Mammary epithelial cell (primary cell): ENCODE measurements at regions of chrX and their contacts with region 1.

Region 1: DNA sequence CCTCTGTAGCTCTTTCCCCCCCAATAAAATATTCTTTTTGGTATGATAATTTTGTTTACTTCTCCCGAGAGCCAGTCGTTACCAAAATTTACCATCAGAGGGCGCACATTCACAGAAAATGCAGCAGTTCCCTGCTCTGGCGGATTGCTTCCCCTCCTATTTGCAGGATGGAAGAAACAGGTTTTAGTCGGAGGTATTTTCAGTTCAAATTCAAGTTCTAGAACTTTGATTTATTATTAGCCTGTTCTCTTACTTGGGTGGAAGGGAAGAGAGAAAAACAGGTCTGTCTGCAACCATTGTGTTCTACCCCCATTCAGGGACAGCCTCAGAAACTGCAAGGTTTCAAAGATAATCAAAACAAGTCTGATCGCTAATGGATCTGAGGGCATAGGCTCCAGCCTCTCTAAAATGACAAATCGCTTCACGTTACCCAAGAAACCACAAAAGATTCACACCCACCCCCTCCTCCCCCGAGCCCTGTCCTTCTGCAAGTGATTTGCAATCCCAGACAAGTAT is 263.8 kb upstream of the RPS6KA3 start:
- DNase-seq: peak; percentile 32
- H3K4me3 ChIP-seq: peak overlapping the region in 1 of 3 experiments; percentile 17
- H3K27ac ChIP-seq: no peak overlapping the region
- H3K4me1 ChIP-seq: no peaks in the 10 kb centered on the region
- H3K27me3 ChIP-seq: no peaks in the 10 kb centered on the region
- CTCF ChIP-seq: peak; percentile 76 to 79

Region 2: DNA sequence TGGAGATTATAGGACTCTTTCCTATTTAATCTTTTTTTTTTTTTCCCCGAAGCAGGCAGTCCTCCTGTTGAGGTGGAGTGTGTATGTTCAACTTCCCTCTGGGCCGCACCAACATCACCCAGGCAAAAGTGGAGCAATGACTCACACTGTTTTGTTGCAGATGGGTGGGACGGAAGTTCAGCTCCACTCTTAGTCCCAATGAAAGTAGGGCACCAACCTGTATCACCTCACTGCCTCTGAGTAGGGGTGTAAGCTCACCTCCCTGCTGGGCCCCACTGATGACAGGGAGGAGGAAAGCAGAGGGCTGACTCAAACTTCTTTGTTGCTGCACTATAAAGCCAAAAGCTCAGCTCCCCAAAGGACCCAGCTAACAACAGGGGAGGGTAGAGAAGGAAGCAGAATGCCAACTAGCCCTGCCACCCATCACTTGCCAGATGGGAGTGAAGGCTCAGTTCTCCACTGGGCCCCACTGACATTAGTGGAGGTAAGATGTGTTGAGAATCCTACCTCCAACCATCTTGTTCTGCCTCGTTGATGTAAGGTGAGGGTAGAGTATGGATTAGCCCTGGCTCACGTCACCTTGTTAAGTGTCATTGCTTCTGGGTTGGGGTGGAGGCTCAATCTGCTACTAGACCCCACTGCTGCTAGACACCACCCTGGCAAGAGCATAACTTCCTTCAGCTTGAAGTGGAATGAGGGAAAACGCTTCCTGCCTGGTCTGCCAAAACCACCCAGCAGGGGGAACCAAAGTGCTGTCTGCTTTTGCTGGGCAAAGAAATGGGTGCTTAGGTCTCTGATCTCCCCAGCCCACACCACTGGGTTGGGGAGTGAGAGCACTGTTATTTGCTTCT is 277.9 kb before region 1 on chrX:
- CTCF ChIA-PET with region 1: no interaction called
- dilution Hi-C with region 1: no loop called
- in situ Hi-C with region 1: no loop called
- intact Hi-C with region 1: loop called (anchors 2 kb)
- DNase-seq: peak; percentile 42
- H3K4me3 ChIP-seq: no peak overlapping the region
- H3K27ac ChIP-seq: no peak overlapping the region
- H3K4me1 ChIP-seq: peaks cover 7% of the 10 kb centered on the region
- H3K27me3 ChIP-seq: no peaks in the 10 kb centered on the region
- CTCF ChIP-seq: peak; percentile 78 to 90

Region 3: GRCh38 chrX:20969002-20969401 is 438.5 kb after region 1 on chrX:
- CTCF ChIA-PET with region 1: no interaction called
- dilution Hi-C with region 1: no loop called
- in situ Hi-C with region 1: no loop called
- intact Hi-C with region 1: loop called (anchors 2 kb)
- DNase-seq: peak; percentile 56
- H3K4me3 ChIP-seq: no peak overlapping the region
- H3K27ac ChIP-seq: no peak overlapping the region
- H3K4me1 ChIP-seq: no peaks in the 10 kb centered on the region
- H3K27me3 ChIP-seq: no peaks in the 10 kb centered on the region
- CTCF ChIP-seq: no peak

Region 4: GRCh38 chrX:21479695-21480270 is 949.3 kb after region 1 on chrX:
- CTCF ChIA-PET with region 1: no interaction called
- dilution Hi-C with region 1: no loop called
- in situ Hi-C with region 1: loop called (anchors 25 kb)
- intact Hi-C with region 1: loop called (anchors 1 kb)
- DNase-seq: peak; percentile 30
- H3K4me3 ChIP-seq: no peak overlapping the region
- H3K27ac ChIP-seq: no peak overlapping the region
- H3K4me1 ChIP-seq: no peaks in the 10 kb centered on the region
- H3K27me3 ChIP-seq: no peaks in the 10 kb centered on the region
- CTCF ChIP-seq: peak; percentile 69 to 78

Region 5: DNA sequence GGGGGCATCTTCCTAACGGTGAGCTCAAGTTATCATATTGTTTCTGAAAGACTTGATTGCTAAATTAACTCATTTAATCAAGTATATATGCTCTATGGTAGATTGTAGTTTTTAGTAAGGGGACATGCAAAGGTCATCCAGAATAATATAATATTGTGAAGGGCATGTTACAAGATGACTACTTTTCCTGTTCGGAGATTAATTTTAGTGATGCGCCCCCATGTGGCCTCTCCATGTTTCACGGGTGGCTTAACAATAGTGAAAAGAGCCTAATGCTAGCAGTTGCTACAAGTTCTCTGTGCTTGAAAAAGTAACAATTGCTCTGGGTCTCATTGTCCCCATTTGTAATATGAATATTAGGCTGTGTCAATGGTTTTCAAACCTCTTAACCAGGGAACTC is 1215.3 kb after region 1 on chrX:
- CTCF ChIA-PET with region 1: no interaction called
- dilution Hi-C with region 1: no loop called
- in situ Hi-C with region 1: no loop called
- intact Hi-C with region 1: loop called (anchors 1 kb)
- DNase-seq: peak; percentile 13
- H3K4me3 ChIP-seq: no peak overlapping the region
- H3K27ac ChIP-seq: no peak overlapping the region
- H3K4me1 ChIP-seq: no peaks in the 10 kb centered on the region
- H3K27me3 ChIP-seq: peaks cover 2% of the 10 kb centered on the region
- CTCF ChIP-seq: peak; percentile 69 to 81